Heart right ventricle (tissue), 16 donors: ENCODE measurements at regions of chr1 and their contacts with region 1.

Region 1: GRCh38 chr1:199182186-199182843 is 543.5 kb downstream of the PTPRC start:
- DNase-seq: no peak
- ATAC-seq: peak in 3 of 8 donors; percentile 75 to 94 (median 90)
- H3K4me3 ChIP-seq: no peak overlapping the region
- H3K27ac ChIP-seq: no peak overlapping the region
- H3K4me1 ChIP-seq: peaks cover 0 to 5% (median 0%) of the 10 kb centered on the region in 9 donors
- H3K27me3 ChIP-seq: no peaks in the 10 kb centered on the region
- CTCF ChIP-seq: no peak

Region 2: DNA sequence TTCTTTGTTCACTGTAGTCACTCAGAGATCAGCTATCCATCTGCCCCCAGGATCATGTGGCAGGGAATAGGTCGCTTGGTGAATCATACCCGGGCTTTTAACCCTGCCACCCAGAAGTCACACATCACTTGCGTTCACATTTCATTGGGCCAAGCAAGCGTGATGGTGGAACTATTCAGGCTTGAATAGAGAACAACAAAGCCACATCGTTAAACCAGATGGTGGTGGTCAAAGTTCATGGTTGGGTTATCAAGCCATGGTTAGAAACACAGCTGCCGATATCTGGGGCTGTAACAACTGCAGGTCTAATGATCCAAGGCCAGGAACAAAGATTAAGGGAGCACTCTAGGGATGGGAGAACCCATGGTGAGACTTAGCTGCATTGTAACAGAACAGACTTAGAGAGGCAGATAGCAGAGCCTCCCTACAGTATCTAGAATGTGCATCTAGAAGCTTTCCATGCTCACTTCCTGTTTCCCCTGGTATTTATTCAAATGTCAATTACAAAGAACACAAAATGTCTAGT is 583.5 kb before region 1 on chr1:
- intact Hi-C with region 1: no loop called
- DNase-seq: no peak
- ATAC-seq: no peak
- H3K4me3 ChIP-seq: peak overlapping the region in 1 of 10 donors; percentile 3
- H3K27ac ChIP-seq: peak overlapping the region in 1 of 10 donors; percentile 4
- H3K4me1 ChIP-seq: peaks cover 0 to 12% (median 0%) of the 10 kb centered on the region in 9 donors
- H3K27me3 ChIP-seq: peaks cover 0 to 3% (median 0%) of the 10 kb centered on the region in 7 donors
- CTCF ChIP-seq: no peak

Region 3: GRCh38 chr1:199009447-199009846 is 172.9 kb before region 1 on chr1:
- intact Hi-C with region 1: no loop called
- DNase-seq: no peak
- ATAC-seq: peak in 3 of 8 donors; percentile 51 to 59 (median 59)
- H3K4me3 ChIP-seq: no peak overlapping the region
- H3K27ac ChIP-seq: no peak overlapping the region
- H3K4me1 ChIP-seq: peaks cover 0 to 20% (median 7%) of the 10 kb centered on the region in 9 donors
- H3K27me3 ChIP-seq: no peaks in the 10 kb centered on the region
- CTCF ChIP-seq: no peak

Region 4: DNA sequence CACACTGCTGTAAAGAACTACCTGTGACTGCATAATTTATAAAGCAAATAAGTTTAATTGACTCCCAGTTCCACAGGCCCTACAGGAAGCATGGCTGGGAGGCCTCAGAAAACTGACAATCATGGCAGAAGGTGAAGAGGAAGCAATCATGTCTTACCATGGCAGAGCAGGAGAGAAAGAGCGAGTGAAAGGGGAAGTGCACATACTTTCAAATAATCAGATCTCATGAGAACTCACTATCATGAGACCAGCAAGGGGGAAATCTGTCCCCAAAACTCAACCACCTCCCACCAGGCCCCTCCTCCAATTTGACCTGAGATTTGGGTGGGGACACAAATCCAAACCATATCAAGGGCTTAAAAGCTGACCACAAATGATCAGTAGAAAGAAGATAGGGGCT is 50.3 kb before region 1 on chr1:
- intact Hi-C with region 1: loop called in 1 of 10 experiments (anchors 5 kb)
- DNase-seq: no peak
- ATAC-seq: no peak
- H3K4me3 ChIP-seq: no peak overlapping the region
- H3K27ac ChIP-seq: no peak overlapping the region
- H3K4me1 ChIP-seq: no peaks in the 10 kb centered on the region
- H3K27me3 ChIP-seq: no peaks in the 10 kb centered on the region
- CTCF ChIP-seq: no peak